WTC11 (cell line): ENCODE measurements at regions of chr15 and their contacts with region 1.

Region 1: DNA sequence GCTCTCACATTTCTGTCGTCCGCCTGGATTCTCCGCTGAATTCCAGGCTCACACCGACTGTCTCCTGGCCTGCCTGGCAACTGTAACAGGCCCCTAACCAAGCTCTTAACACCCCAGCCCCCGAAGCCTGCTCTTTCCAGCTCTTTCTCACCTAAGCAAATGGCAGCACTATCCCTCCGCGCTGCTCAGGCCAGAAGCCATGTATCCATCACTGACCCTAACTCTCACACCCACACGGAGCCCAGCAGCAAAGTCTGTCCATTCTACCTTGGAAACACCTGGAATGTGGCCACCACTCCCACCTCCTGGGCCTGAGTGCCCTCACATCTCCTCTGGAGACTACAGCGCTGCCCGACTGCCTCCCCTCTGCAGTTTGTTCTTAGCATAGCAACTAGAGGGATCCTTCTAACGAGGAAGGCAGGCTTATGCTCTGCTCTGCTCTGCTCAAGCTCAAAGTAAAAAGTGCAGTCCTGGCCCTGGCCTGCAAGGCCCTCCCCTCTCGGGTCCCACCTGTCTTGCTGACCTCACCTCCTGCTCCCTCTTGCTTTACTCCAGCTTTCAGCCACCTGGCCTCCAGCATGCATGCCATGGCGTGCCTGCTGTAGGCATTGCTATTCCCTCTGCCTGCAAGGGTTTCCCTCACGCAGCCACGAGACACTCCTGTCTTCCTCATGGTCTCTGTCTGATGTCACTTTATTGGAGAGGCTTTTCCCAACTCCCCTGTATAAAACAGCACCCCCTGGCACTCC is 27.2 kb downstream of the FEM1B start:
- DNase-seq: peak; percentile 46
- ATAC-seq: peak; percentile 68
- H3K4me3 Mint-ChIP-seq: no peak overlapping the region
- H3K27ac Mint-ChIP-seq: peak overlapping the region; percentile 55
- H3K4me1 Mint-ChIP-seq: peaks cover 39% of the 10 kb centered on the region
- H3K27me3 Mint-ChIP-seq: no peaks in the 10 kb centered on the region
- CTCF ChIP-seq: no peak

Region 2: DNA sequence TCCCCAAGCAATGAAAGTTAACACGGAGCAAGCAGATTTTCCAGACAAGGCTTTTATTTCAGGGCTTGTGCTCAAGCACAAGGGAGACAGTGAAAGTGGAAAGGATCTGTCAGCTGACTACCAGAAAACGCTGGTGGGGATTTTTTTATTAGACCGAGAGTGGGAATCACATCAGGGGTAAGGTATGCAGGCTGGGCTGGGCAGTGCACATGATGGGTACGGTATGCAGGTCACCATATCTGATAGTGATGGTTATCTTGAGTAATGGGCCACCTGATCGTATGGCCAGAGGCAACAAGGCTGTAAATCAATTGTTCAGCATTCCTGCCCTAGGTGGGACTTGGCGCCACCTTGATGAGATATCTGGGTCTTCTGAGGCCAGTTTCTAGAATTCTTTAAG is 287.6 kb before region 1 on chr15:
- CTCF ChIA-PET with region 1: no interaction called
- POLR2A ChIA-PET with region 1: no interaction called
- DNase-seq: no peak
- ATAC-seq: no peak
- H3K4me3 Mint-ChIP-seq: no peak overlapping the region
- H3K27ac Mint-ChIP-seq: no peak overlapping the region
- H3K4me1 Mint-ChIP-seq: 0 out of 2 replicates have a peak, but pooled peaks cover 3% of the 10 kb centered on the region
- H3K27me3 Mint-ChIP-seq: no peaks in the 10 kb centered on the region; the same call in 1 of the 2 replicates
- CTCF ChIP-seq: no peak

Region 3: DNA sequence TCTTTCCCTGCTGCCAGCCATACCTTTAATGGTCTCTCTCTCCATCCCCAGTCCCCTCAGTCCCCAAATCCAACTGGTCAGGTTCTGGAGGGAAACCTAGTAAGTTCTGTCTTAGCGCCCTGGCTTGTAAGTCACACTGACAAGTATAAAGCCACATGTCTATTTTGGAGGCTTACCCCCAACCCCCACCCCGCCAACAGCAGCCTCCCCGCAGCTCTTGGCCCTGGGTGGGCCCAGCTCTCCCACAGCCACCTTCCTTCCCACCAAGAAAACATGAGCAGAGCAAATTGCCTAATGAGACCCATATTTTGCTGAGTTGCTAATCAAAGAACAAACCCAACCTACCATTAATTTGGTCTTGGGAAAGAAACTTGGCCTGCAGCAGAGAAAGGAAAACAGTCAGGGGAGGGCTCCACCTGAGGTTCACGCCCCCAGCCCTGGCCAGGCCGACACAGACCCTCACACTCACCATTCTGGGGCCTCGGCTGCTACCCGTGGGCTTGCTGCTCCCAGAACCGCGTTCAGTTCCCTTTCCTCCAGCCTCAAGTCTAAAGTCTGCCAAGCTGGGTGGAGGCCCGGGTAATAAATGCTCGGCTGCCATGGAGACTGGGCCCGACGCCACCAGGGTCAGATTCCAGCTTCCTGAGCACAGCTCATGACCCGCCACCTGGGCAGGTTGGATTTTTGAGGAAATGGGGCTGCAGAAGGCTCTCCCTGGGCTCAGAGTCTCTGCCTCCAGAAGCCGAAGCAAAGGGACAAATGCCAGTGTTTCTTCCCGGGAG is 99.8 kb before region 1 on chr15 and contains the start of gene CALML4:
- CTCF ChIA-PET with region 1: interaction called, 15 read pairs
- POLR2A ChIA-PET with region 1: no interaction called
- DNase-seq: no peak
- ATAC-seq: no peak
- H3K4me3 Mint-ChIP-seq: peak within 1 kb of the TSS; percentile 12; the same call in 1 of the 2 replicates
- H3K27ac Mint-ChIP-seq: peak within 1 kb of the TSS; percentile 63
- H3K4me1 Mint-ChIP-seq: peaks cover 46% of the 10 kb centered on the region
- H3K27me3 Mint-ChIP-seq: no peaks in the 10 kb centered on the region
- CTCF ChIP-seq: no peak
- total RNA-seq, gene CALML4: 8.9 to 10.1 TPM (median 9.8 TPM) in 3 replicates

Region 4: GRCh38 chr15:68218847-68219798 is 85.6 kb before region 1 on chr15:
- CTCF ChIA-PET with region 1: no interaction called
- POLR2A ChIA-PET with region 1: no interaction called
- DNase-seq: no peak
- ATAC-seq: no peak
- H3K4me3 Mint-ChIP-seq: no peak overlapping the region
- H3K27ac Mint-ChIP-seq: no peak overlapping the region
- H3K4me1 Mint-ChIP-seq: no peaks in the 10 kb centered on the region
- H3K27me3 Mint-ChIP-seq: no peaks in the 10 kb centered on the region
- CTCF ChIP-seq: no peak

Region 5: DNA sequence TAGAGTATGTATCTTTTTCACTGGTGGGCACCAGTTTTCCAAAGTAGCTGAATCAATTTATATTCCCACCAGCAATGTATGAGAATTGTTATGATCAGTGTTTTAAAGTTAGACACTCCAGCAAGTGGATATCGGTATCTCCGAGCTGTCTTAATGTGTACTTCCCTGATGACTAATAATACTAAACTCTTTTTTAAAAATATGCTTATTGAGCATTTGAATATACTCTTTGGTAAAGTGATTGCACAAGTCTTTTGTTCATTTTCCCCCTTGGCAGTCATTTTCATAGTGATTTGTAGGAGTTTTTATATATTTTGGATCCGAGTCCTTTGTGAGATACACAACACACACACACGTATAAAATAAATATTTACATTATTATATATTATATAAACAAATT is 39.7 kb before region 1 on chr15:
- CTCF ChIA-PET with region 1: interaction called, 16 read pairs
- POLR2A ChIA-PET with region 1: no interaction called
- DNase-seq: no peak
- ATAC-seq: no peak
- H3K4me3 Mint-ChIP-seq: no peak overlapping the region
- H3K27ac Mint-ChIP-seq: no peak overlapping the region
- H3K4me1 Mint-ChIP-seq: peaks cover 30% of the 10 kb centered on the region
- H3K27me3 Mint-ChIP-seq: no peaks in the 10 kb centered on the region
- CTCF ChIP-seq: no peak

Region 6: GRCh38 chr15:68335251-68335650 is 30.5 kb after region 1 on chr15:
- CTCF ChIA-PET with region 1: interaction called, 14 read pairs
- POLR2A ChIA-PET with region 1: no interaction called
- DNase-seq: no peak
- ATAC-seq: no peak
- H3K4me3 Mint-ChIP-seq: no peak overlapping the region
- H3K27ac Mint-ChIP-seq: no peak overlapping the region
- H3K4me1 Mint-ChIP-seq: peaks cover 13% of the 10 kb centered on the region
- H3K27me3 Mint-ChIP-seq: no peaks in the 10 kb centered on the region
- CTCF ChIP-seq: no peak

Region 7: GRCh38 chr15:68374168-68374745 is 69.5 kb after region 1 on chr15:
- CTCF ChIA-PET with region 1: interaction called, 18 read pairs
- POLR2A ChIA-PET with region 1: no interaction called
- DNase-seq: no peak
- ATAC-seq: no peak
- H3K4me3 Mint-ChIP-seq: no peak overlapping the region
- H3K27ac Mint-ChIP-seq: no peak overlapping the region
- H3K4me1 Mint-ChIP-seq: no peaks in the 10 kb centered on the region
- H3K27me3 Mint-ChIP-seq: no peaks in the 10 kb centered on the region; the same call in 1 of the 2 replicates
- CTCF ChIP-seq: no peak

Region 8: DNA sequence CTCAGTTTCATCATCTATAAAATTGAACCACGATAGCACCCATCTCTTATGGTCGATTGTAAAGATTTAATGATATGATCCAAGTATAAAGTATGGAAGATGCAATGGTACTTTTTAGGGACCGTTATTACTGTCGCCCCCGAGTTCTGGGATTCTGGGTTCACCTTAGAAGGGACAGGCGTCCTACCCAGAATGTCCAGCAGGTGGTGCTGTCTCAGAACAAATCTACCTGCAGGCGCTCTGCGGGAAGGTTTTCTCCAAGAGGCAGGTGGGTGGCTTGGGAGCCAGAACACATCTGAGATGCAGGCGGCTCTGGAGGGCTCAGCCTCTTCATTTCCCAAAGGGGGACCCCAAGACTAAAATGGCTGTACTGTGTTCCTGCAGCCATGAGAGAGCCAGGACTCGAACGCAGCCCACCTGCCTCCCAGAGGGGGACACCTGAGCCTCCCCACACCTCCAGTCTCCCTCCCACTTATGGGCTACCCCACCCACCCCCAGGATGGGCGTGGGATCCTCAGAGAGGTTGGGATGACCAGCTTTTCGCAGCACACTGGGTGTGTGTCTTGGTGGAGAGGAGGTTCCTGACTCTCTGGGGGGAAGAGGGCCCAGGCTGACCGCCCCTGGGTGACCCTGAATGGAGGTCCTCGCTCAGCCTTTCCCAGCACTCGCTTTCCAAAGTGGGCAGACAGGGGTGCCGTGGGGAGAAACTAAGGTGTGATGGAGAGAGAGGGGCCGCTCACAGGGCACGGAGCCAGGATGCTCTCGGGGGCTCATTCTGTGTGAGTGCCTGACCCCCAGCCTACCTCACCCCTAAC is 245.9 kb after region 1 on chr15:
- CTCF ChIA-PET with region 1: interaction called, 37 read pairs
- POLR2A ChIA-PET with region 1: no interaction called
- DNase-seq: peak; percentile 94
- ATAC-seq: peak; percentile 79
- H3K4me3 Mint-ChIP-seq: no peak overlapping the region
- H3K27ac Mint-ChIP-seq: no peak overlapping the region
- H3K4me1 Mint-ChIP-seq: no peaks in the 10 kb centered on the region
- H3K27me3 Mint-ChIP-seq: peaks cover 10% of the 10 kb centered on the region
- CTCF ChIP-seq: peak; percentile 94